ENCODE measurements at regions of chr12 and their contacts with region 1.

Region 1: GRCh38 chr12:31406345-31406744 is 80.4 kb upstream of the SINHCAF start:
- DNase-seq: no peak
- H3K4me3 ChIP-seq: no peak overlapping the region
- H3K27ac ChIP-seq: no peak overlapping the region
- H3K4me1 ChIP-seq: no peaks in the 10 kb centered on the region
- H3K27me3 ChIP-seq: no peaks in the 10 kb centered on the region
- CTCF ChIP-seq: no peak

Region 2: GRCh38 chr12:31362759-31363415 is 43.5 kb before region 1 on chr12:
- CTCF ChIA-PET with region 1: interaction called, 10 read pairs
- dilution Hi-C with region 1: no loop called
- in situ Hi-C with region 1: no loop called
- intact Hi-C with region 1: no loop called
- DNase-seq: peak; percentile 37
- H3K4me3 ChIP-seq: peak overlapping the region in 1 of 3 experiments; percentile 15
- H3K27ac ChIP-seq: no peak overlapping the region
- H3K4me1 ChIP-seq: peaks cover 26% of the 10 kb centered on the region
- H3K27me3 ChIP-seq: no peaks in the 10 kb centered on the region
- CTCF ChIP-seq: peak in 1 of 2 donors; percentile 32

Region 3: DNA sequence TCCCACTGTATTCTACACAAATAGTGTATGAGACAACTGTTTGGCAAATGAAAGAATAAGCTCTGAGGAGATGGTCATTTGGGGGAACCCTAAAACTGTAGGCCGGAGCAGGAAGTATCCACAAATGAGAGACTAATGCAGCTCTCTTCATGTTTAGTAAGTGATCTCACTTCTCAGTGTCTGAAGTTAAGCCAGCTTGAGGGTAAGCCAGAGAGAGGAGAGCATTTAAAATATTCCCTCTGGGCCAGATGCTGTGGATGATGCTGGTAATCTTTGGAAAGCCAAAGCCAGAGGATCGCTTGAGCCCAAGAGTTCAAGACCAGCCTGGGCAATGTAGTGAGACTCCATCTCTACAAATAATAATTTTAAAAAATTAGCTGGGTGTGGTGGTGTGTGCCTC is 50.2 kb after region 1 on chr12:
- CTCF ChIA-PET with region 1: no interaction called
- dilution Hi-C with region 1: loop called (anchors 5 kb)
- in situ Hi-C with region 1: no loop called
- intact Hi-C with region 1: no loop called
- DNase-seq: no peak
- H3K4me3 ChIP-seq: no peak overlapping the region
- H3K27ac ChIP-seq: no peak overlapping the region
- H3K4me1 ChIP-seq: no peaks in the 10 kb centered on the region
- H3K27me3 ChIP-seq: no peaks in the 10 kb centered on the region
- CTCF ChIP-seq: no peak

Region 4: DNA sequence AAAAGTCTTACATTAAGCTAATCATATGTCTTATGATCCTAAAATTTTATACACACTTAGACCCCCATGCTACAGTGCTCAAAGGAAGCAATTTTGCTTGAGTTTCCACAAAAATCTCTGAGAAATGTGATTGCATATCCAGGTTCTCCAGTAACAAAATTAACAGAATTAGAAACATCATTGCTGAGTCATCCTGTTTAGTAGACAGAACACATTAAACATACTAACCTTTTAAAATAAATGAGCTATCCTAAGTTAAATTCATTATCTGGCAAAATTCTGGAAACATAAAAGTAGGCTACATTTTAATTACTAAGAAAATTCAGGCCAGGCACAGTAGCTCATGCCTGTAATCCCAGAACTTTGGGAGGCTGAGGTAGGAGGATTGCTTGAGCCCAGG is 89.9 kb after region 1 on chr12:
- CTCF ChIA-PET with region 1: no interaction called
- dilution Hi-C with region 1: loop called (anchors 5 kb)
- in situ Hi-C with region 1: no loop called
- intact Hi-C with region 1: no loop called
- DNase-seq: no peak
- H3K4me3 ChIP-seq: no peak overlapping the region
- H3K27ac ChIP-seq: no peak overlapping the region
- H3K4me1 ChIP-seq: peaks cover 16% of the 10 kb centered on the region
- H3K27me3 ChIP-seq: no peaks in the 10 kb centered on the region
- CTCF ChIP-seq: no peak

Region 5: DNA sequence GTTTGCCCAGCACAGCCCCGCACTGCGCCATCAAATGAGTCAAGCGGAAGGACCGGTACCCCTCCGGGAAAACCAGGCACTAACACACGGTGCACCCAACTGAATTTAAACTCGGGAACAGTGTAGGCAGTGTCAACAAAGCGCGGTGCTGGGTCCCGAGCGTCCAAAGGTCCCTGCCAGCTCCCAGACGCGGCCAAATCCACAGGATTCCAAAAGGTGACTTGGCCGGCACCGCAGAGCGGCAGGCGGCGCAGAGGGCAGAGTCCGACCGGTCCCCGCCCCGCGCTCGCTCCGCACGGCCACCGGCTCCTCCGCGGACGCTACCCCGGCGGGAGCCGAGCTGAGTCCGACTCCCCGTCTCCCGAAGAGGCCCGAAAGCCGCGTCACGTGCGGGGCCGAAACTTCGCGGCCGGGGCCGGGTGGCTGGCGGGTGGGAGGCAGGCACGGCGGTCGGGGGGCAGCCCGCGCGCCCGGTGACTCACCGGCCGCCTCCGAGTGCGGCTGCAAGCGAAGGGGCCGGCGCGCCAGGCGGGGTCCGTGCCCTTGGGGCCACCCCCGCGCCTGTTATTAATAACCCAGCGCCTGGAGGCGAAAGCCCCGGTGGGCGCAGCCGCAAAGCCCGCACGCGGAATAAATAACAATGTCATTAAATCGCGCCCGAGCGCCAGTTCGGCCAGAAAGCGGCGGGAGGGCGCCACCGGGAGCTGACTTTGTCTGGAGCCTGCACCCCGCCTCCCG is 183.7 kb after region 1 on chr12:
- CTCF ChIA-PET with region 1: no interaction called
- dilution Hi-C with region 1: no loop called
- in situ Hi-C with region 1: no loop called
- intact Hi-C with region 1: loop called (anchors 1 kb)
- DNase-seq: peak; percentile 52
- H3K4me3 ChIP-seq: peak overlapping the region; percentile 61 to 90 (median 70)
- H3K27ac ChIP-seq: peak overlapping the region; percentile 47
- H3K4me1 ChIP-seq: peaks cover 12% of the 10 kb centered on the region
- H3K27me3 ChIP-seq: no peaks in the 10 kb centered on the region
- CTCF ChIP-seq: peak in 1 of 2 donors; percentile 19

Region 6: DNA sequence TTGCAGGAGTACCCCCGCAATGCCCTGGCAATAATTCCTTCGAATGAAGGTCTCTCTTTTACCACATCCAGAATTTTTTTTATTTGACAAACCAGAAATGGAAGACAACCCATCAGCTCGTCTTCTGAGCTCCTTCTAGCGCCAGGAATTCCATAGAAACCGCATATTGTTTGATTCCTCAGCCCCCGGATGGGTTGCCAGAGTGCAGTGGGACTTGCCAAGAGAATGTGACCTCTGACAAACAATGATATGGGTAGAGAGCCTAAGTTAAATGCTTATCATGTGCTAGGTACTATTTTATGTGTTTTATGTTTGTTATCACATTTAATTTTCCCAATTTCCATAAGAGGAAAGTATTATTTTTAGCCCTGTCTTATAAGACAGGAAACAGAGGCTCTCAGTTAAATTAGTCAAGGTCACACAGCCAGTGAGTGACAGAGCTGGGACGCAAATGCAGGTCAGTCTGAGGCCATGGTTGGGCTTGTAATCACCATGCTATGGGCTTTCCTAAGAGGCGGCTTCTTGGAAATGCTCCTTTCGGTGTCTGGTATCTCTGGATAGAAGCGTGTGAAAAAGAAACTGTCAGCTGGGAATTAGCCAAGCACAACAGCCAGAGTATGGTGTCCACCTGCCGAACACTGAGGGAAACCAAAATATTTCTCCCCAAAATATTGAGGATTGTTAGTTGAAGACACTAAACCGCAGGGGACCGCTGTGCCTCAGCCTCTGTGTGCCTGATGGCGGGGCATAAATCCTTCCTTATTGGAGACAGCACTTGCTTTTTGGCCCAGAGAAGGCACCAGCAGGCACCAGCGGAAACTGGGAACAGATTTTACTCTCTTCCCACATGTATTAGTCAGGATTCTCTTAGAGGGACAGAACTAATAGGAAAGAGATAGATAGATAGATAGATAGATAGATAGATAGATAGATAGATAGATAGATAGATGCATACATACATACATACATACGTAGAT is 223.7 kb after region 1 on chr12:
- CTCF ChIA-PET with region 1: no interaction called
- dilution Hi-C with region 1: no loop called
- in situ Hi-C with region 1: loop called (anchors 5 kb)
- intact Hi-C with region 1: no loop called
- DNase-seq: no peak
- H3K4me3 ChIP-seq: no peak overlapping the region
- H3K27ac ChIP-seq: no peak overlapping the region
- H3K4me1 ChIP-seq: no peaks in the 10 kb centered on the region
- H3K27me3 ChIP-seq: no peaks in the 10 kb centered on the region
- CTCF ChIP-seq: no peak

Region 7: DNA sequence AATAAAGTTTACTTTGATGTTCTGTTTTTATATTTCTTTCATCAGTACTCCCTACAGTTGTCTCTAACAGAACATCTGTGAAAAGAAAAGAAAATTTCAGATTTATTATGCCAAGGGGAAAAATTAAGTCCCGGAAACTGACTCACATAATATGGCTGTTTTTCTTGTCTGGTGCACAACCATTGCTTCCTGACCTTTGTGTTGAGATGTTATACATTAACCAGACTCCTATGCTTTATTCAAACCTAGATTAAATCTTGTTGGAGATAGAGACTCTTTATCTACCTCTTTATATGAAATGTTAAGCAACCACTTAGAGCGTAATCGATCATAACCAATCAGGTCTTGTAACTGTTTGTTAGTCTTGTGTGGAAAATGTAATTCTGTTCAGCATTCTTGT is 662.7 kb after region 1 on chr12:
- CTCF ChIA-PET with region 1: no interaction called
- dilution Hi-C with region 1: no loop called
- in situ Hi-C with region 1: no loop called
- intact Hi-C with region 1: loop called (anchors 10 kb)
- DNase-seq: no peak
- H3K4me3 ChIP-seq: no peak overlapping the region
- H3K27ac ChIP-seq: no peak overlapping the region
- H3K4me1 ChIP-seq: no peaks in the 10 kb centered on the region
- H3K27me3 ChIP-seq: no peaks in the 10 kb centered on the region
- CTCF ChIP-seq: no peak

Measured in mammary epithelial cell (primary cell).